Mammary epithelial cell (primary cell): ENCODE measurements at regions of chr14 and their contacts with region 1.

Region 1: DNA sequence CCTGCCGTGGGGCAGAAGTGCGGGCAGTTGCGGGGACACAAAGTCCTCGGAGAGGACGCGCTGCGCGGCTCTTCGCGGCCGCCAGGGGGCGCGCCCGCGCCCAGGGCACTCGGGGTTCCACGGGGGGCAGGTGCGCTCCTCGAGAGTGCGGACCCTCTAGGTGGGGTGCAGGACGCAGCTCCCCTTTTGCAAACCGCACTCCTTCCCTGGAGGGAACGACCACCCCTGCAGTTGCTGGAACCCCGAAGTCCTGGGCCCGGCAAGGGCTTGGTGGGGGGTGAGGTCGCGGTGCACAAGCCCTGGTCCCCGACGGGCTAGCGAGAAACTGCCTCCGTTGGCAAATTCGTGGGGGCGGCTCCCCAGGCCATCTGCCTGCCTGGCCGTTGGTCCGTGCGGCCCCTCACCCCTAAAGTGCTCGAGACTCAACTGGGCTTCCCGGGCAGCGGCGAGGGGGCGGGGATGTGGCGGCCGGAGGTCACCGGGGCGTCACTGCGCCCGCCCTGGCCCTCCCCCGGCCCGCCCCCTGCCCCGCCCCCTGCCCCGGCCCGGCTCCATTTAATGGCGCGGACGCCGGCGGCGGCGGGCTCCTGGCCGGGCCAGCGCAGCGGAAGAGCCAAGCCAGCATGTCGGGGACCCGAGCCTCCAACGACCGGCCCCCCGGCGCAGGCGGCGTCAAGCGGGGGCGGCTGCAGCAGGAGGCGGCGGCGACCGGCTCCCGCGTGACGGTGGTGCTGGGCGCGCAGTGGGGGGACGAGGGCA is at the start of gene ADSS1:
- DNase-seq: peak; percentile 35
- H3K4me3 ChIP-seq: peak within 1 kb of the TSS; percentile 49 to 63 (median 50)
- H3K27ac ChIP-seq: no peak within 1 kb of the TSS
- H3K4me1 ChIP-seq: peaks cover 19% of the 10 kb centered on the region
- H3K27me3 ChIP-seq: no peaks in the 10 kb centered on the region
- CTCF ChIP-seq: peak; percentile 59 to 94
- total RNA-seq, gene ADSS1: 1.5 to 3.8 TPM

Region 2: DNA sequence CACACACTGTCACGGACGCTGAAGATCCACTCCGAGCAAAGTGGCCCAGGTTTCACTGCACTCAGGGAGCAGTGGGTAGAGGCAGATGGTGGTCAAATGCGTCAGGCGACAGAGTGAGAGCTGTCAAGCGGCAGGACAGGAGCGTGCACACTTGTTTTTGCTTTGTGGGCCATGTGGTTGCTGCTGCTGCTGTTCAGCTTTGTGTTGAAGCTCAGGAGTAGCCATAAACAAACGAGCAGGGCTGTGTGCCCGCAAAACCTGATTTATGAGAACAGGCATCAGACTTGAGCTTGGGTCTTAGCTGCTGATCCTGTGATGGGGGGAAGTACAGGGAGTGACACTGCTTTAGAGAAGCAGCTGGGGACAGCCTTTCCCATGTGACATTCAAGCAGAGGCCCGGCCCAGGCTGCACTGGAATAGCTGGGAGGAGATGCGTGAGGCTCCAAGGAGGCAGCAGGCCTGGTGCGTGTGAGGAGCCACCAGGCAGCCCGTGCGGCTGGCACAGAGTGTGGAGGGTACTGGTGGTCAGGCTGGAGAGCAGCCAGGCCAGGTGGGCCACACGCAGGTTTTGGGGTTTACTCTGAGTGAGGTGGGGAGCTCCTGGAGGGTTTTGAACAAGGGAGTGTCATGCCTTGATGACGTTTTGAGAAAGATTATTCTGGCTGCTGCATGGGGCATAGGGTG is 669.5 kb before region 1 on chr14:
- CTCF ChIA-PET with region 1: no interaction called
- dilution Hi-C with region 1: no loop called
- in situ Hi-C with region 1: no loop called
- intact Hi-C with region 1: no loop called
- DNase-seq: no peak
- H3K4me3 ChIP-seq: no peak overlapping the region
- H3K27ac ChIP-seq: no peak overlapping the region
- H3K4me1 ChIP-seq: no peaks in the 10 kb centered on the region
- H3K27me3 ChIP-seq: no peaks in the 10 kb centered on the region
- CTCF ChIP-seq: no peak

Region 3: GRCh38 chr14:104774454-104775072 is 50.7 kb after region 1 on chr14:
- CTCF ChIA-PET with region 1: interaction called, 11 read pairs
- dilution Hi-C with region 1: no loop called
- in situ Hi-C with region 1: no loop called
- intact Hi-C with region 1: no loop called
- DNase-seq: no peak
- H3K4me3 ChIP-seq: no peak overlapping the region
- H3K27ac ChIP-seq: no peak overlapping the region
- H3K4me1 ChIP-seq: no peaks in the 10 kb centered on the region
- H3K27me3 ChIP-seq: no peaks in the 10 kb centered on the region
- CTCF ChIP-seq: no peak